Activated CD4-positive, alpha-beta memory T cell treated with anti-CD3 and anti-CD28 coated beads, Interleukin-2, amount 10 ng/mL, durations not matched to agents 7 days and 5 days (primary cell): ENCODE measurements at regions of chr4 and their contacts with region 1.

Region 1: GRCh38 chr4:4269856-4270255 is 20.1 kb downstream of the LYAR start:
- DNase-seq: peak; percentile 56
- H3K4me3 Mint-ChIP-seq: peak overlapping the region; percentile 70
- H3K27ac Mint-ChIP-seq: peak overlapping the region; percentile 99
- H3K4me1 Mint-ChIP-seq: peaks cover 42% of the 10 kb centered on the region
- H3K27me3 Mint-ChIP-seq: no peaks in the 10 kb centered on the region

Region 2: DNA sequence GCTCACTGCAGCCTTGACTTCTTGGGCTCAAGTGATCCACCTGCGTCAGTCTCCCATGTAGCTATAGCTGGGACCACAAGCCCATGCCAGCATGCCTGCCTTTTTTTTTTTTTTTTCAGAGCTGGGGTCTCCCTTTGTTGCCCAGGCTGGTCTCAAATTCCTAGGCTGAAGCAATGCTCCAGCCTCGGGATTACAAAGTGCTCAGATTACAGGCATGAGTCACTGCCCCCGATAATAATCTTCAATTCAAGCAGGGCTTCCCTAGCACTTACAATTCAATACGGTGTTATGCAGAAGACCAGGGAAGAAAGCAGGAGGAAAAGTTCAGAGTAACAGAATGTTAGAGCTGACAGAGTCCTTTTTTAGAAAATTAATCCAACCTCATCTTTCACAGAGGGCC is 69.2 kb before region 1 on chr4:
- CTCF ChIA-PET with region 1: no interaction called
- POLR2A ChIA-PET with region 1: no interaction called
- DNase-seq: no peak
- H3K4me3 Mint-ChIP-seq: no peak overlapping the region
- H3K27ac Mint-ChIP-seq: no peak overlapping the region
- H3K4me1 Mint-ChIP-seq: no peaks in the 10 kb centered on the region
- H3K27me3 Mint-ChIP-seq: peaks cover 4% of the 10 kb centered on the region

Region 3: DNA sequence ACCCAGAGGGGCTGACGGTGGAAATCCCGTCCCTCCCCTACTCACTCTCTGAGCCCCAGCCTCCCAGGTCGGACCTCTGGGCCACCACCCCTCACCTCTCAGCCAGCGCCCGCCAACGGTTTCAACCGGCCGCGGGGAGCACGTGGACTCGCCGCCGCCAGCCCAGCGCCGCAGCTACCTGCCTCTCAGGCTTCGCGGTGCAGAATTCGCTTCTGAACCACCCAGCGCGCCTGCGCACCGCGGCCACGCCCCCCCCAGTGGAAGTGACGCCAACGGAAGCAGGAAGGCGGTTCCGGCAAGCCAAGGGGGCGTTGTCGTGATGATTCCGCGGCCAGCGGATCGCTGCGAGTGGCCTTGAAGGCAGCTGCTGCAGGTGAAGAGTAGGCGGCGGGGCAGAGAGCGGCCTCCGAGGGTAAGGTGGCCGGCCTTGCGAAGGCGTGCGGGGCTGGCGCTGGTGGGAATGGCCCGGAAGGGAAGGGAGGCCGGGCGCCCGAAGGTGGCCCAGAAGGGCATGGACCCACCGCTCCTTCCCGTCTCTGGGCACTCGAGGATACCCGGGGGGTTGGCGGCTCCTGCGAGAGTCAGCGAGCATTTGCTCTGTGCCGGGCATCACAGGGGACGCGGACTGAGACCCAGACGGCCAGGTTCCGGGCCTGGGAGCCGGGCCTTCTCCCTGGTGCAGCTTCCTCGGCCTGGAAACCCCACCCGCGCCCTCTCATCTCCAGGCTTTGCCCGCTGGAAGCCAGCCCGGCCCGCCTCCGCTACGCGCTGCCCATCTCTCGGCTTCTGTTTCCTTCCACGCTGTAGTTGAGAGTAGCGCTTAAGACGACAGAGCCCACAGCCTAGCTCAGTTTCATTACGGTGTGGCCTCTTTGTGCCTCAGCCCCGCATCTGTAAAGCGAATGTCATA is 20.3 kb after region 1 on chr4 and contains the starts of genes LYAR and ZBTB49:
- CTCF ChIA-PET with region 1: interaction called, 3 read pairs
- POLR2A ChIA-PET with region 1: interaction called, 11 read pairs
- DNase-seq: peak; percentile 97
- H3K4me3 Mint-ChIP-seq: peak within 1 kb of the TSS; percentile 97
- H3K27ac Mint-ChIP-seq: peak within 1 kb of the TSS; percentile 83
- H3K4me1 Mint-ChIP-seq: peaks cover 42% of the 10 kb centered on the region
- H3K27me3 Mint-ChIP-seq: no peaks in the 10 kb centered on the region
- total RNA-seq, gene LYAR: 47.4 to 49.8 TPM
- total RNA-seq, gene ZBTB49: 6.6 to 7.4 TPM

Region 4: DNA sequence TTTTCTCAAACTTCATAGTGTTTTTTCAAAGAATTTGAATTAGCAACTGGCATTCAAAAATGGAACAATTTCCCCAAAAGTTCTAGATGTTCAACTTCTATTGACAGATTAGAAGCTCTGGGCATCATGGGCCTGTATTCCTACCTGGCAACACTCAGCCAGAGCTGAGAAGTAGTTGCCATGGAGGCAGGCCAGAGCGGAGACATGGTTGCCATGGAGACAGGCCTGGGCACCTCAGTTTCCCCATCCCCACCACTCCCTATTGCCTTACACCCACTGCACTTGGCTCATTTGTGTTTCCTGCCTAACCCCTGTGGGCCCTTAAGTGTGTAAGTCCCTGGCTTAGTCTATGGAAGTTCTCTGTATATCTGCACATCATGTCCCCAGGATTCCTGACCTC is 473.3 kb after region 1 on chr4:
- CTCF ChIA-PET with region 1: no interaction called
- POLR2A ChIA-PET with region 1: no interaction called
- DNase-seq: no peak
- H3K4me3 Mint-ChIP-seq: no peak overlapping the region
- H3K27ac Mint-ChIP-seq: no peak overlapping the region
- H3K4me1 Mint-ChIP-seq: no peaks in the 10 kb centered on the region
- H3K27me3 Mint-ChIP-seq: no peaks in the 10 kb centered on the region